Endothelial cell of umbilical vein (primary cell): ENCODE measurements at regions of chr6 and their contacts with region 1.

Region 1: GRCh38 chr6:150667977-150668716 is 68.5 kb downstream of the PLEKHG1 start:
- DNase-seq: peak; percentile 93
- H3K4me3 ChIP-seq: no peak overlapping the region
- H3K27ac ChIP-seq: peak overlapping the region; percentile 8
- H3K4me1 ChIP-seq: peaks cover 11% of the 10 kb centered on the region
- H3K27me3 ChIP-seq: no peaks in the 10 kb centered on the region
- CTCF ChIP-seq: peak in 1 of 2 donors; percentile 20
- POLR2A ChIP-seq: no peak

Region 2: DNA sequence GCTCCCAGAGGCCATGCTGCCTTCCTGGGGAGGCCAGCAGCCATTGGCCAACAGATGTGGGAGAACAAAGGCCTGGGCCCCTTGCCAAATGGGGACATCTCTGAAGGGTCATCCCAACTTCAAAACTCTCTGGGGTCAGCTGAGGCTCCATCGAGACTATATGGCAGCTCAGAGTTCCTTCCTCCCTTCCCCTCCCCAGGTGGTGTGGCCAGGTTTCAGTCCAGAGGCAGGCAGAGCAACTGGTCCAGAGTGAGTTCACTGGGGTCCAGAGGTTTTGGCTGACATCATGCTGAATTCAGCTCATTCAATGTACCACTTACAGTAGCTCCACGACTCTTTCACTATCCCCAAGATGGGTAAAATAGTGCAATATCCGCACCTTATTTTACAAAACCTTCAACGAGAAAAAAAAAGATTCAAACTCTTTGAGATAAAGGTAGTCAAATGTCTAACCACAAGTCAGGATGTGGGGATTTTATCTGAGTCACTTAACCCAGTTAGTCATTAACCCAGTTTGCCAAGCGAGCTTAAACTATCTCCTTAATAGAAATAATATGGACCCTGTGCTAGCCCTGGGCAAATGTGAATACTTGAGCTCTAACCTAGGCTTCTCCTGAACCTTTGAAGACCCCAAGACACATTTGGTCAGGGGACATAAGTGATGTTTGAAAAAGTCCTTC is 176.9 kb before region 1 on chr6:
- CTCF ChIA-PET with region 1: no interaction called
- POLR2A ChIA-PET with region 1: no interaction called
- dilution Hi-C with region 1: no loop called
- intact Hi-C with region 1: loop called (anchors 5 kb)
- DNase-seq: no peak
- H3K4me3 ChIP-seq: no peak overlapping the region
- H3K27ac ChIP-seq: no peak overlapping the region
- H3K4me1 ChIP-seq: peaks cover 18% of the 10 kb centered on the region
- H3K27me3 ChIP-seq: no peaks in the 10 kb centered on the region
- CTCF ChIP-seq: no peak
- POLR2A ChIP-seq: no peak

Region 3: DNA sequence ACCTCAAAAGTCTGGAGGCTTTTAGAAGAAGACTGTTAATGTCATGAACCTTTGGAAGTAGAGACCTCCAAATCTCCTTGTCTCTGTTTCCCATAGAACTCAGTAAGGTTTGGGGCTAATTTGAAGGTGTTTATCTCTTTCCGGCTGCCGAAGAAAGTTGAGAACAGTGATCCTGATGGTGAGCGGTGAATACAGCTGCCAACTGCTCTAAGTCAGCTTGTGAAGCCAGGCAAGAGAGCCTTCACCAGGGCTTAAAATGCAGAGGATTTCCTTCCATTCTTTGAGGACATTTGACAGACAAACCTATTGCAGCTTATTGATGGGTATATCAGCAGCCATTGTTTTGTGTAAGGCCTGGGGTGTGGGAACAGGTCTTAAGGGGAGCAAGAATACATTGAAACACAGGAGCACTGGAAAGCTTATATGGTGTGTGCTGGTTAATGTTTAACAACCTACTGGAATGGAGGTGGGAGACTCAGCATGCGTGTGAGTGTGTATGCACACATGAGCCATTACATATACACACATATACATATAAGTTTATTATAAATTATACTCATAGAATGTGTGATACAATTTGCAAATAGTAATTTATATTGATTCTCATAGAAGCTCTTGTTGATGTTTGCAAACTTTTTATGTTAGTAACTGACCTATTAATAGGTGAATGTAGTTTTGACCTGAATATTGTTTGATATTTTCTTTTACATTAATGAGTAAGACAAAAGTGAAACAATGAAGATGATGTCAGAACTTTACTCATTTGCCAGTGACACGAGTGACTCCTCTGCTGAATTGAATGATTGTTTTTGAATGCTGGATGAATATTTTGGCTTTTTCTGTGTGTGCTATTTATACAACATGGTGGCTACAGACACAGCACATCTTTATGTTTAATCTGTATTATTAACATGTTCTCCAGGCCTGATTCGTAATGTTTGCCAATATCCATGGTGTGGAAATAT is 50.4 kb before region 1 on chr6:
- CTCF ChIA-PET with region 1: interaction called, 3 read pairs
- POLR2A ChIA-PET with region 1: no interaction called
- dilution Hi-C with region 1: no loop called
- intact Hi-C with region 1: loop called (anchors 1 kb)
- DNase-seq: peak; percentile 67
- H3K4me3 ChIP-seq: peak overlapping the region in 1 of 3 experiments; percentile 10
- H3K27ac ChIP-seq: peak overlapping the region; percentile 21
- H3K4me1 ChIP-seq: peaks cover 38% of the 10 kb centered on the region
- H3K27me3 ChIP-seq: no peaks in the 10 kb centered on the region
- CTCF ChIP-seq: no peak
- POLR2A ChIP-seq: no peak